ENCODE measurements at regions of chr11 and their contacts with region 1.

Region 1: DNA sequence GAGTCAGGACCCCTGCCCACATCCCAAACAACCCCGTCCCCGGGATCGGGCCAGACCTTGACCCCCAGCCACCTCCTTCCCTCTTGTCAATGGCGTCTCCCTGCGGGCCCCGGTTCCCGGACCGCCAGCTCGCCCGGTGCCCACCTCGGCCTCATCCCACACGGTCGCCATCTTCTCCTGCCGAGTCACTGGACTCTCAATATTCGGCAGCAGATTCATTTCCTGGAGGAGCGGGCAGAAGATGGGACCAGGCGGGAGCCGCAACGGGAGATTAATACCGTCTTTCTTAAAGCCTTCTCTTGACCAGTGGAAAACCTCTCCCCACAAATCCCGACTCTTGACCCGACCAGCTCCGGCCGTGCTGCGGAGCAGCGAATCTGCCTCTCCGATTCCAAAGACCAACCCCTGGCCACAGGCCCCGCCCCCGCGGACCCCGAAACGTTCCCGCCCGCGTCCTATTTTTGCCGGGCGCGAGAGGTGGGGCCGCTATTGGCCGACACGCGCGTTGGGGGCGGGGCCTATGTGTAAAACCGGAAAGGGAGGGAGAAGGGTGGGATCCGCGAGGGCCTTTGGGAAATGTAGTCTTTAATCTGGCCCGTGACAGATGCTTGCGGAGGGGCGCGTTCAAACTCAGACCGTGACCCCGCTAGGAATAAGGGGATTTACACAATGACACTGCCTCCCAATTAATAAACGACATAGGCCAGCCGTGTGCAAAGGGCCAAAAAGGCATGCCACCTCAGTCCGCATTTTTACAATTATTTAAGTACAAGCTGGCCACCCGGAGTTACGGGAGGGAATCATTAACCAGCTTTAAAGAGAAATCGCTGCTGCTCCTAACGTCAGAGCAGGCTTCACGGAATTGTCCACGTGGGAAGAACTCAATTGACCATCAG is at the start of gene PSMC3:
- DNase-seq: peak; percentile 96 to 99 (median 98)
- ATAC-seq: peak; percentile 98
- H3K4me3 ChIP-seq: peak within 1 kb of the TSS; percentile 68 to 98
- H3K4me3 Mint-ChIP-seq: peak within 1 kb of the TSS; percentile 100
- H3K27ac ChIP-seq: peak within 1 kb of the TSS; percentile 77 to 81
- H3K27ac Mint-ChIP-seq: peak within 1 kb of the TSS; percentile 98
- H3K4me1 ChIP-seq: peaks cover 14% of the 10 kb centered on the region
- H3K4me1 Mint-ChIP-seq: peaks cover 28% of the 10 kb centered on the region
- H3K27me3 ChIP-seq: no peaks in the 10 kb centered on the region
- H3K27me3 Mint-ChIP-seq: no peaks in the 10 kb centered on the region
- CTCF ChIP-seq: no peak
- total RNA-seq, gene PSMC3: 58.1 to 63.4 TPM

Region 2: GRCh38 chr11:46769636-46770221 is 656.6 kb before region 1 on chr11:
- CTCF ChIA-PET with region 1: no interaction called
- POLR2A ChIA-PET with region 1: no interaction called
- intact Hi-C with region 1: no loop called
- DNase-seq: no peak
- ATAC-seq: no peak
- H3K4me3 ChIP-seq: no peak overlapping the region
- H3K4me3 Mint-ChIP-seq: no peak overlapping the region
- H3K27ac ChIP-seq: no peak overlapping the region
- H3K27ac Mint-ChIP-seq: no peak overlapping the region
- H3K4me1 ChIP-seq: no peaks in the 10 kb centered on the region
- H3K4me1 Mint-ChIP-seq: no peaks in the 10 kb centered on the region
- H3K27me3 ChIP-seq: no peaks in the 10 kb centered on the region
- H3K27me3 Mint-ChIP-seq: no peaks in the 10 kb centered on the region
- CTCF ChIP-seq: no peak

Region 3: DNA sequence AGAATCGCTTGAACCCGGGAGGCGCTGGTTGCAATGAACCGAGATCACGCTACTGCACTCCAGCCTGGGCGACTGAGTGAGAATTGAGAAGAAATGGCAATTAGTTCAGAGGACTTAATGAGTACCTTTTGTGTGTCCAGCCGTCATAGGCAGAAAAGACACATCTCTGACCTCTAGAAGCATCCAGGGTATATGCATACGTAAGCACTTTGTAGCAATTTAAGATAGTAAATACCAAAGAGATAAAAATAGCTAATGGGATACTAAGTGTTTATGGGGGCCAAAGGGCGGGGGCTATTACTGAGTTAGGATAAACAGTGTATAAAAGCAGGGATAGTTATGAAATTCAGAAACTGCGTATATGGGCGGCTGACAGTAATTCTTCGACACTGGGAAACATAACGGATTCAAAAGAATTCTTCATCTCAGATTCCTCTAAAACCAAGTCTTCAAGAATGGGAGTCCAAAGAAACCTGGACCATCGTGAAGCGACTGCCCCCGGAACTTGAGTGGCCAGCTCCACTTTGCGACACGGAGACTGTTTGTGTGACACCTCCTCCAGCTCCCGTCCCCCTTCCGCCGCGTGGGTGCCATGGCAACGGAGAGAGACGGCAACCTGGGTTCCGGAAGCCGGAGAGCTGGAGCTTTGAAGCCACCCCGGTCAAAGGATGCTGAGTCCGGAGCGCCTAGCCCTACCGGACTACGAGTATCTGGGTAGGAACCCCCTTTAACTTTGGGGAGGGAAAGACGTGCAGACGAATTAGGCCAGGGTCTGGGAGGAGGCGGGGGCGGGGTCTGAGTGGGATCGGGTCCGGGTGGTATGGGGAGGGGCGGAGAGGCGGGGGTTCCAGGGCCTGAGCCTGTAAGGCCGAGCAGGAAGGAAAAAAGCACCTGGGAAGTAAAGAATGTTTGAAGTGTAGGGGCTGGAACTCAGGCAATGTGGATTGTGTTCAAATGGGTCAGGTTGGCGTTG is 489.9 kb before region 1 on chr11 and contains the start of gene CSTPP1:
- CTCF ChIA-PET with region 1: no interaction called
- POLR2A ChIA-PET with region 1: no interaction called
- intact Hi-C with region 1: loop called in 1 of 2 experiments (anchors 2 kb)
- DNase-seq: peak; percentile 80 to 97 (median 93)
- ATAC-seq: peak; percentile 96
- H3K4me3 ChIP-seq: peak within 1 kb of the TSS; percentile 73 to 82
- H3K4me3 Mint-ChIP-seq: peak within 1 kb of the TSS; percentile 97
- H3K27ac ChIP-seq: peak within 1 kb of the TSS; percentile 58 to 71
- H3K27ac Mint-ChIP-seq: peak within 1 kb of the TSS; percentile 95
- H3K4me1 ChIP-seq: peaks cover 9% of the 10 kb centered on the region
- H3K4me1 Mint-ChIP-seq: peaks cover 20% of the 10 kb centered on the region
- H3K27me3 ChIP-seq: no peaks in the 10 kb centered on the region
- H3K27me3 Mint-ChIP-seq: peaks cover 6% of the 10 kb centered on the region
- CTCF ChIP-seq: no peak
- total RNA-seq, gene CSTPP1: 4.1 to 4.6 TPM

Region 4: DNA sequence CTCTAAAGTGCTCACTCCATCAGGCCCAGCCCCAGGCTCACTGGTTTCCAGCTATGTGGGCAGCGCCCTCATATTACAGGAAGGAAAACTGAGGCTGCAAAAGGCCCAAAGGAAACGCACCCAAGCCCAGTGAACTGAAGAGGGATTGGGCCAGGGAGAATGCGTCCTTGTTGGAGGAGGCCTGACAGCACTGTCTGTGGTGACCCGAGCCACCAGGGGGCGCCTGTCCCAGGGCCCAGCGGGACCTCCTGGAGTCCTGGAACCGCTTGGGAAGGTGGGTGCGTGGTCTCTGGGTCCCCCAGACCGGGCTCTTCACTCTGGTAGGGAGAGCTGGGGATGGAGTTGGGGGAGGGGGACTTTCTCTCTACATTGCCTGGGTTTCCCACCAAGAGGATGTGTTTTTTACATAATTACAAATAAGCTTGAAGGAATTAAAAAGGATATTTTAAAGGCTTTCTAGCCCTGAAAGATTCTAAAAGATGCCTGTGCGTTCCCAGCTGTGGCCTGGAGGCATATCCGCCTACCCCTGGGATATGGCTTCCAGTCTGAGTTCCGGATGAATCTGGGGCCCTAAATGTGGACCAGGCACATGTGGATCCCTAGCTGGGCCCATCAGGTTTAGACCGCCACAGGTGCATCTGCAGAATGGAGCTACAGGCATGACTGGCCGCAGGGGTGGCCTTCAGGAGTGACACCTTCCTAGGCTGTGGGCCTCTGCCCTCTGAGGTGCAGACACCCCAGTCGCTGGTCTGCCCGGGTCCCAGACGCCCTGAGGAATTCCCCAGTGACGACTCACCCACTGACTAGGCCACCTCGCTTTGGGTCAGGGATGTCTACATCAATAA is 52.2 kb before region 1 on chr11:
- CTCF ChIA-PET with region 1: interaction called, 19 read pairs
- POLR2A ChIA-PET with region 1: no interaction called
- intact Hi-C with region 1: loop called in 1 of 2 experiments (anchors 1 kb)
- DNase-seq: peak; percentile 66 to 94 (median 86)
- ATAC-seq: peak; percentile 97
- H3K4me3 ChIP-seq: no peak overlapping the region
- H3K4me3 Mint-ChIP-seq: no peak overlapping the region
- H3K27ac ChIP-seq: no peak overlapping the region
- H3K27ac Mint-ChIP-seq: no peak overlapping the region
- H3K4me1 ChIP-seq: peaks cover 3% of the 10 kb centered on the region
- H3K4me1 Mint-ChIP-seq: peaks cover 9% of the 10 kb centered on the region
- H3K27me3 ChIP-seq: no peaks in the 10 kb centered on the region
- H3K27me3 Mint-ChIP-seq: no peaks in the 10 kb centered on the region
- CTCF ChIP-seq: peak; percentile 91

Region 5: GRCh38 chr11:47578524-47579460 is 152.5 kb after region 1 on chr11 and contains the starts of genes KBTBD4 and NDUFS3:
- CTCF ChIA-PET with region 1: no interaction called
- POLR2A ChIA-PET with region 1: no interaction called
- intact Hi-C with region 1: loop called (anchors 1 kb)
- DNase-seq: peak; percentile 74 to 95 (median 89)
- ATAC-seq: peak; percentile 94
- H3K4me3 ChIP-seq: peak within 1 kb of the TSS; percentile 90 to 92
- H3K4me3 Mint-ChIP-seq: peak within 1 kb of the TSS; percentile 99
- H3K27ac ChIP-seq: peak within 1 kb of the TSS; percentile 76 to 84
- H3K27ac Mint-ChIP-seq: peak within 1 kb of the TSS; percentile 97
- H3K4me1 ChIP-seq: peaks cover 31% of the 10 kb centered on the region
- H3K4me1 Mint-ChIP-seq: peaks cover 54% of the 10 kb centered on the region
- H3K27me3 ChIP-seq: no peaks in the 10 kb centered on the region
- H3K27me3 Mint-ChIP-seq: no peaks in the 10 kb centered on the region
- CTCF ChIP-seq: no peak
- total RNA-seq, gene KBTBD4: 31.8 to 32.6 TPM
- total RNA-seq, gene NDUFS3: 159 to 179 TPM

Measured in CD8-positive, alpha-beta T cell (primary cell).